ENCODE measurements at regions of chr5 and their contacts with region 1.

Region 1: DNA sequence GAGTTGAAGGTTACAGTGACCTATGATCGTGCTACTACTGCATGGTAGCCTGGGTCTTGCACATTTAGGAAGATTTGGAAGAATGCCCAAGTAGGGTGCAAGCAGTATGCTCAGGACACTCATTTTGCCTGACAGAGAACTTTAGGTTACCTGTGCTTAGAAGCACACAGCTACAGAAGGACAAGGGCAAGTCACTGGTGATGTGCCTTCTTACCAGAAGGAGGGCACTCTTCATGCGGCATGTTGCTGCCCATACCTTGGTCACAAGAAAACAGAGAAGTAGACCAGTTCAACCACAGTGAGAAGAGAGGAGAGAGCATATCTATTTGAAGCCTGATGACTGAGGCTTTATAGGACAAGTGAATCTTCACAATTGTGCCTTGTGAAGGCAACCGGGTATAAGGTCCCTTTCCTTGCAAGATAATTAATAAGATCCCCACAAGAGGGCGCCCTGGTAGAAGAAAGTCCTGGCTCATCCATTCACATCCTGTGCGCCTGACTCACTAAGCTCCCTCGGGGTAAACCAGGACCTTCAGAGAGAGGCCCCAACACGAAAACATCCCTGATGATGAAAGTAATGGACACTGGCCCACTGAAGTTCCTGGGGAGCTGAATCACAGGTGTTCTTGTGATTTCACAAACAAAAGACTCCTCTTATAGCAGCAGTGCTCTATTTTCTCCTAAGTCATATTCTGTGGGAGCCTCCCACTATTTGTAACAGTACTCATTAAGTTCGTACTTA is 38.1 kb upstream of the STARD4 start:
- DNase-seq: peak; percentile 48
- ATAC-seq: peak; percentile 90 to 93
- H3K4me3 ChIP-seq: no peak overlapping the region
- H3K27ac ChIP-seq: peak overlapping the region; percentile 54
- H3K4me1 ChIP-seq: peaks cover 8% of the 10 kb centered on the region
- H3K27me3 ChIP-seq: no peaks in the 10 kb centered on the region
- CTCF ChIP-seq: peak; percentile 68

Region 2: DNA sequence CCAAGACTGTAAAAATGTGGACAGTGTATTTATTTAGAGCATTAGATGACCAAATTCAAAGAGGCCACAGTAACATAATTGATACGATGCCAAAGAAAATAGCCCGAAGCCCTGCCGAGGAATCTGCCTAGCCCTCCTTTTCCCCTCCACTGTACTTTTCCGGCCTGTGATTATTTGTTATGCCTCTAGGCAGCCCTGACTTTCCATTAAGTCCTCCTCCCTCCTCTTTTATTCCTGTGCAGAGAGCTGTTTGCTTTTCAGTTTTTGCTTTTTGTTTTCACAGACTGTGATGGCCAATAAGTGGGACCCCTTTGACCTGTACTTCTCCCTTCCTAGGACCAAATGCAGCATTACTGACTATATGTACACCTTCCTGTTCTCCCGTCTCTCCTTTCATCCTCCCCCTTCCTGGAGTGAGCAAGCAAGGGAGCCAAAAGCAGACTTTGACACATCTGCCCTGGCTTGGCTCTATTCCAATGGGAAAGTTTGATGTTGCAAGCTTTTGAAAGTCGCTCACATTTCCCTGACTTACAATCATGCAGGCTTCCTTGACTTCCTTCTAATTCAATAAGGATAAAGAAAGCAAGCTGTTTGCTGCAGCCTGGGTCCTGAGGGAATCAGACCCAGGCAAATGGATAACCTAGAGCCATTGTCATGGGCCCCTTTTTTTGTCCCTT is 130.4 kb after region 1 on chr5:
- intact Hi-C with region 1: no loop called
- DNase-seq: no peak
- ATAC-seq: peak; percentile 71 to 80
- H3K4me3 ChIP-seq: peak overlapping the region; percentile 24
- H3K27ac ChIP-seq: peak overlapping the region; percentile 32
- H3K4me1 ChIP-seq: peaks cover 17% of the 10 kb centered on the region
- H3K27me3 ChIP-seq: no peaks in the 10 kb centered on the region
- CTCF ChIP-seq: no peak

Region 3: GRCh38 chr5:111830333-111830732 is 279.9 kb after region 1 on chr5:
- intact Hi-C with region 1: no loop called
- DNase-seq: no peak
- ATAC-seq: no peak
- H3K4me3 ChIP-seq: no peak overlapping the region
- H3K27ac ChIP-seq: no peak overlapping the region
- H3K4me1 ChIP-seq: no peaks in the 10 kb centered on the region
- H3K27me3 ChIP-seq: no peaks in the 10 kb centered on the region
- CTCF ChIP-seq: no peak

Region 4: DNA sequence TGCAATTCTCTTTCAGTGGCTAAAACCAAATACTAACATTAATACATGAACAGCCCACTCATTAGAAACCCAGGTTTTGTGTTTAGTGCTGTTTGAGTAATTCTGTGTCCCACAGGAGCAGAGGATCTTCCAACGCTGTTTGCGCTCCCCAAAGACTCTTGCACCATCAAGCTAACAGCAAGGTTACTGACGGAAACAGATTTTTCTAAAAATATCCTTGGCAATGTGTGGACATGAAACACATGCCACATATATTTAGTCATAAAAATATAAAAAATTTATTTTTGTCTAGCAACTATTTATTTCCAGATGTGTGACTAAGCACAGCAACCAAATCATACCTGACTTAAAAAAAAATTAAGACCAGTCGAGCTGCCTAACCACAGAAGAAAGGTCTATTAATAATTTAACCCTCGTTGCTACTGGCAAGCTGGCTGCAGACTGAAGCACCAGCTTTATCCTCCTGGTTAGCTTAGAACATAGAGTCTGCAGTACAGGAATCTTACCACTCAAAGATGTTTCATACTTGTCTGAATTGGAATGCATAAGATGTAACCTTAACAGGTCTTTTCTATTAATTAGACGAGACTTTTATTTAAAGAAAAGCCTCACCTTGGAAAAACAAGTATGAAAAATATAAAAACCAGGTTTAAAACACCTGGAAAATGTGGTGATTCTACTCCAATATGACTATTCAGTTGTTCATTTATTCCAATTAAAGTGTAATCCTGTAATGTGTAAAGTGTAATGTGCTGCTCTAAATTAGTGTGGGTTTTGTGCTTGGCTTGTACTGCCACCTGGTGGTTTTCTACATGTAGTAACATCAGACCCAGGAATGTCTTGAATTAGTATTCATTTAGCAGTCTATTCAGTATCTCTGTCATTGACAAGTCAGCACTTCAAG is 596.1 kb after region 1 on chr5:
- intact Hi-C with region 1: loop called (anchors 10 kb)
- DNase-seq: no peak
- ATAC-seq: peak; percentile 78 to 85
- H3K4me3 ChIP-seq: no peak overlapping the region
- H3K27ac ChIP-seq: no peak overlapping the region
- H3K4me1 ChIP-seq: peaks cover 32% of the 10 kb centered on the region
- H3K27me3 ChIP-seq: no peaks in the 10 kb centered on the region
- CTCF ChIP-seq: peak; percentile 86